Activated CD8-positive, alpha-beta memory T cell treated with anti-CD3 and anti-CD28 coated beads, Interleukin-2, amount 10 ng/mL, durations not matched to agents 7 days and 5 days (primary cell): ENCODE measurements at regions of chr6 and their contacts with region 1.

Region 1: GRCh38 chr6:33147807-33148666 is 44.2 kb downstream of the COL11A2 start:
- DNase-seq: no peak
- ATAC-seq: no peak
- H3K4me3 Mint-ChIP-seq: no peak overlapping the region
- H3K27ac Mint-ChIP-seq: no peak overlapping the region
- H3K4me1 Mint-ChIP-seq: peaks cover 3% of the 10 kb centered on the region
- H3K27me3 Mint-ChIP-seq: peaks cover 38% of the 10 kb centered on the region

Region 2: DNA sequence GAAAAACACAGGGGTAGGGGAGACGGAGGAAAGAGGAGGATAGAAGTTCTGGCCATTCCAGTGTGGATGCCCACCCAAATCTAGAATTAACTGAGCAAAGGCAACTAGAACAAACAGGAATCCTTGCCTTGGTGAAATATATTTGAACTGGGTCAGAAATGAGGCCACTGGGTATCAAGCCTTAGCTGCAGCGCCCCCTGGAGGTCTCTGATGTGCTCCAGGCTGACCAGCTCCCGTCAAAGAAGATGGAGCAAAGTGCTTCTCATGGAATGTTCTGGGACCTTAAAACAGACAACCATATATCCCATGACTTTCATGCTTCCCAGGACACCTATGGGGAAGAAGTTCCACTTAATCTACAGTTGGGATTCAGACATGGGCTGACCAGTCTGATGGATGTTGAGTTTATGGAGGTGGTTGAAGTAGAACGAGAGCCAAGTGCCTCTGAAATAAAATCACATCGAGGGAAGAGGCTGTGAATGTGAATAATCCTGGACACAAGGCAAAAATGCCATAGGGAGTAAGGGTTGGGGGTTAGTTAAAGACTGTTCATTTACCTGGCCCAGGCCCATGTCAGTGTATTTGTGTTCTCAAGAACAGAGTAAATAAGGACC is 21.8 kb before region 1 on chr6:
- CTCF ChIA-PET with region 1: interaction called, 27 read pairs
- DNase-seq: peak; percentile 73
- ATAC-seq: peak; percentile 56
- H3K4me3 Mint-ChIP-seq: no peak overlapping the region
- H3K27ac Mint-ChIP-seq: no peak overlapping the region
- H3K4me1 Mint-ChIP-seq: peaks cover 21% of the 10 kb centered on the region
- H3K27me3 Mint-ChIP-seq: peaks cover 23% of the 10 kb centered on the region

Region 3: DNA sequence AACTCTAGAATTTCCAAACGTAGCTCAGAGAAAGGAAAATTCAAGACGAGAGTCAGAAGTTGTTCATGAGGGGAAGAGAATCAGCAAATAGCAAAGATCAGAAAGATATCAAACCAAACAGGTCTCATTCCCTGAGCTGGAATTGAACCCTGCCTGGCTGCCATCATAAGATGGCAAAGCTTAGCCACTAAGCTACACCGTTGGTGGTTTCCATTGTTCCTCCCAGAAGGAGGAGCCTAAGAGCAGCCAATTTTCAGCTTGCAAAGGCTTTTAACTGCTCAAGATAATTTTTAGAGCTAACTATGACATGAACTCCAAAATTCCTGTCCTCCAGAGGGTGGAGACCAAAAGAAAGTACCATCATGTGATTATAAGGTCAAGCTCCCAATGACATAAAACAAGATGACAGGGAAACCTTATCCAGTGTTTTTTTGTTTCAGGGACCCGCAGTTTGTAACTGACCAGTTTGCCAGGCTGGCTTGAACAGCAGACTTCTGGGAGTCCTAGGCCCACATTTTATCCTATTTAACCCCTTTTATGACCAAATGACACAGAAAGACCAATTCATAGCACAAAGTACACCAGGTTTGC is 11.6 kb before region 1 on chr6:
- CTCF ChIA-PET with region 1: interaction called, 11 read pairs
- DNase-seq: no peak
- ATAC-seq: no peak
- H3K4me3 Mint-ChIP-seq: no peak overlapping the region
- H3K27ac Mint-ChIP-seq: no peak overlapping the region
- H3K4me1 Mint-ChIP-seq: no peaks in the 10 kb centered on the region
- H3K27me3 Mint-ChIP-seq: peaks cover 43% of the 10 kb centered on the region

Region 4: DNA sequence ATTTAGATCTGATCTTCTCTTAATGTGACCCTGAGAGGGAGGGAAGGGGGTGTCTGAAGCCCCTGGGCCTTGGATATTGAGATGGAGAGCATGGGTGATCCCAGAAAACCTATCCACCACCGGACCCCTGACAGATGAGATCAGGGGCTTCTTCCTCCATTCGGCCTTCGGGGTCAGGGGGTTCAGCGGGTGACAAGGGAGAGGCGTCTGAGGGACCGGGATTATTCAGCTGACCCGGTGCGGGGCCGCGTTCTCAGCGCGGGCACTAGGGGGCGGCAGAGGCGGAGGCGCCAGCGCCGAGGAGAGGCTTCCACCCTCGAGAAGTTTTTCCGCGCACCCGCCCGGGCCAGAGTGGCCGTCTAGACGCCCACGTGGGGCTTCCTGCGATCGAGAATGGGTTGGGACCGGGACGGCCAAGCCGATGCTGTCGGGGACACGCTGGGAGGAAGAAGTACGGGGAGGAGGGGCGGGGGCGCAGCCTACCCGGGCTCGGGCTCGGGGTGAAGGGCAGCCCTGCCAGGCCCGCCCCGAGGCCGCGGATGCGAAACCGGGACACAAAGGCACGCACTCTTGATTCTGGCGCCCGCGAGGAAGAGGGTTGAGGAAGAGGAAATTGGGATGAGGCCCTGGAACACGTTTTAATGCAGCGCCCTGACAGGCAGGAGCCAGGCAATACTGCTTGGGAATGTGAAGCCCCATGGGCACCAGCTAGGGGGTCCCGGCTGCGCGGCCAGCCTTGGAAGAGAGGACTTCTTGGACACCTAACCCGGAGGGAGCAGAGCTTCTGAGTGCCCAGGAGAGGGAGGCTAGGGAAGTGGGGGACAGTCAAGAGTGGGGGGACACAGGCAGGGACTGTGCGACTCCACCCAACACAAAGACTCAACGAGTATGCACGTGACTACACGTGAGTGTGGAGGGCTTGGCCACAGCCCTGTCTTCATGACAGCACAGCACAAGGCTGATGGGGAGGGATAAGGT is 13.6 kb after region 1 on chr6:
- CTCF ChIA-PET with region 1: interaction called, 19 read pairs
- DNase-seq: peak; percentile 86
- ATAC-seq: peak; percentile 98
- H3K4me3 Mint-ChIP-seq: peak overlapping the region; percentile 76
- H3K27ac Mint-ChIP-seq: peak overlapping the region; percentile 74
- H3K4me1 Mint-ChIP-seq: peaks cover 16% of the 10 kb centered on the region
- H3K27me3 Mint-ChIP-seq: peaks cover under 1% of the 10 kb centered on the region